ENCODE measurements at regions of chr1 and their contacts with region 1.

Region 1: GRCh38 chr1:184838489-184838951 is 83.9 kb upstream of the EDEM3 start:
- DNase-seq: peak; percentile 38
- H3K4me3 Mint-ChIP-seq: no peak overlapping the region
- H3K27ac Mint-ChIP-seq: no peak overlapping the region
- H3K4me1 Mint-ChIP-seq: peaks cover 11% of the 10 kb centered on the region
- H3K27me3 Mint-ChIP-seq: no peaks in the 10 kb centered on the region

Region 2: DNA sequence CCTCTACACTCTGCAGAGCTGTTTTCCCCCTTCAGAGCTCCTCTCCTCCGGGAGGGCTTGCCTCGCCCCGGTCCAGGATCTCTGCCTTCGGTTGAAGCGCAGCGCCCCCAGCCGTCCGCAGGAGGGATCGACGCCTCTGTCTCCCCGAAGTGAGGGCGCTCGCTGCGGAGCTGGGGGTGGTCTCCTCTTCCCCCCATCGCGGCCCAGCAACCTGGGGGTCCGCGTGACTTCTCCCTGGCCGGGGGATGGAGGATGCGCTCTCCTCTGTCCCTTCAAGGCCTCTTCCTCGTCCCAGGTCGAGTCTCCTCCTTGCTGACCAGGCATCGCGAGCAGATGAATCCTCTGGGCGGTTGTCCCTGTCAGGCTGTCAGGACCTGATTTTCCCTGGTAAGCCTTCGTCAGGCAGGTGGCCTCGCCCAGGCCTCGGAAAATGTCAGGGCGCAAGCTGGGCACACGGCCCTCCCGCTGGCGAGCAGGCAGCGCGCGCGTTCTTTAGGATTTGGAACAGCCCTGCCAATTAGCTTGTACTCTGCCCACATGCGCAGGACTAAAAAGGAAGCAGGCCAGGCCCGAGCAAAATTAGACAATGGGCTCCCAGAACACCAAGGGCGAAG is 174.4 kb before region 1 on chr1:
- intact Hi-C with region 1: no loop called
- DNase-seq: peak; percentile 82
- H3K4me3 Mint-ChIP-seq: peak overlapping the region; percentile 39
- H3K27ac Mint-ChIP-seq: no peak overlapping the region
- H3K4me1 Mint-ChIP-seq: no peaks in the 10 kb centered on the region
- H3K27me3 Mint-ChIP-seq: peaks cover 42% of the 10 kb centered on the region

Region 3: DNA sequence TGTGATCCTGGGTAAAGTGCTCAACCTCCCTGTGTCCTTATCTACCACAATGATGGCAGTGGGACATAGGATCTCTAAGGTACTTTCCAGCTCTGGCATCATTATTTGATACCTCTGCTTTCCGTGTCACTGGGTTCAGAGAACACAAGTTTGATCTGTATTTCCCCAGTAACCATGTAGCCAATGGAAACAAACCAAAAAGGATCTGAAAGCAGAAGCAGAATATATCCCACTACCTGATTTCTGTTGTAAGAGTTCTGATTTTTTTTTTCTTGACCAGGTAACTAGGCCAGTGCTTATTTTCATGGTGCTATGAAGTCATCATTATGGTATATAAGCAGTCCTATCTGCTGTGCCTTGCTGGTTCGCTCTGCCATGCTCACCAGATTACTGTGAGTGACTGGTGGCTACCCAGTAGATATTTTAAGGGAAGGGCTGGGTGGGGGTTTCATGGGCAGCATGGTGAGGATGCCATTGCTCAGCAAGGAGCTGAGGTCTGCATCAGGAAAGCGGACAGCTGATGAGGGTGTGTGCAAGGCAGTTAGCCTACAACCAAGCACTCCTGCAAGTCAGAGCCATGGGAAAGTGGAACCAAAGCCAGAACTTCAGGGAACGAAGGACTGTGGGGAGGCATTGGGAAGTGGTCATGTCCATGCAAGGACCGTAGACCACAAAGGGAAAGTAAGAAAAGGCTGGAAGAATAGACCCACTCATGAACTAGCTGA is 21.0 kb after region 1 on chr1:
- intact Hi-C with region 1: loop called (anchors 1 kb)
- DNase-seq: no peak
- H3K4me3 Mint-ChIP-seq: no peak overlapping the region
- H3K27ac Mint-ChIP-seq: no peak overlapping the region
- H3K4me1 Mint-ChIP-seq: peaks cover 6% of the 10 kb centered on the region
- H3K27me3 Mint-ChIP-seq: peaks cover 4% of the 10 kb centered on the region